ENCODE measurements at regions of chr18 and their contacts with region 1.

Region 1: GRCh38 chr18:2636126-2636631 is 19.3 kb upstream of the SMCHD1 start:
- DNase-seq: no peak
- H3K4me3 ChIP-seq: peak overlapping the region; percentile 19 to 31
- H3K4me3 Mint-ChIP-seq: peak overlapping the region; percentile 81 to 88 (median 85)
- H3K27ac ChIP-seq: peak overlapping the region; percentile 87
- H3K27ac Mint-ChIP-seq: peak overlapping the region in 6 of 7 donors; percentile 97 to 99 (median 98)
- H3K4me1 ChIP-seq: peaks cover 88% of the 10 kb centered on the region
- H3K4me1 Mint-ChIP-seq: peaks cover 61 to 100% (median 88%) of the 10 kb centered on the region in 4 donors
- H3K27me3 ChIP-seq: no peaks in the 10 kb centered on the region
- H3K27me3 Mint-ChIP-seq: peaks cover 0 to 2% of the 10 kb centered on the region in 2 donors

Region 2: GRCh38 chr18:2376707-2377106 is 259.5 kb before region 1 on chr18:
- CTCF ChIA-PET with region 1: no interaction called
- POLR2A ChIA-PET with region 1: no interaction called
- intact Hi-C with region 1: no loop called
- DNase-seq: no peak
- H3K4me3 ChIP-seq: no peak overlapping the region
- H3K4me3 Mint-ChIP-seq: no peak overlapping the region
- H3K27ac ChIP-seq: no peak overlapping the region
- H3K27ac Mint-ChIP-seq: no peak overlapping the region
- H3K4me1 ChIP-seq: no peaks in the 10 kb centered on the region
- H3K4me1 Mint-ChIP-seq: no peaks in the 10 kb centered on the region
- H3K27me3 ChIP-seq: no peaks in the 10 kb centered on the region
- H3K27me3 Mint-ChIP-seq: peaks cover 23 to 31% of the 10 kb centered on the region in 2 donors

Region 3: GRCh38 chr18:2480575-2480974 is 155.6 kb before region 1 on chr18:
- CTCF ChIA-PET with region 1: no interaction called
- POLR2A ChIA-PET with region 1: no interaction called
- intact Hi-C with region 1: no loop called
- DNase-seq: no peak
- H3K4me3 ChIP-seq: no peak overlapping the region
- H3K4me3 Mint-ChIP-seq: no peak overlapping the region
- H3K27ac ChIP-seq: no peak overlapping the region
- H3K27ac Mint-ChIP-seq: no peak overlapping the region
- H3K4me1 ChIP-seq: no peaks in the 10 kb centered on the region
- H3K4me1 Mint-ChIP-seq: no peaks in the 10 kb centered on the region
- H3K27me3 ChIP-seq: no peaks in the 10 kb centered on the region
- H3K27me3 Mint-ChIP-seq: peaks cover 15 to 26% of the 10 kb centered on the region in 2 donors

Region 4: DNA sequence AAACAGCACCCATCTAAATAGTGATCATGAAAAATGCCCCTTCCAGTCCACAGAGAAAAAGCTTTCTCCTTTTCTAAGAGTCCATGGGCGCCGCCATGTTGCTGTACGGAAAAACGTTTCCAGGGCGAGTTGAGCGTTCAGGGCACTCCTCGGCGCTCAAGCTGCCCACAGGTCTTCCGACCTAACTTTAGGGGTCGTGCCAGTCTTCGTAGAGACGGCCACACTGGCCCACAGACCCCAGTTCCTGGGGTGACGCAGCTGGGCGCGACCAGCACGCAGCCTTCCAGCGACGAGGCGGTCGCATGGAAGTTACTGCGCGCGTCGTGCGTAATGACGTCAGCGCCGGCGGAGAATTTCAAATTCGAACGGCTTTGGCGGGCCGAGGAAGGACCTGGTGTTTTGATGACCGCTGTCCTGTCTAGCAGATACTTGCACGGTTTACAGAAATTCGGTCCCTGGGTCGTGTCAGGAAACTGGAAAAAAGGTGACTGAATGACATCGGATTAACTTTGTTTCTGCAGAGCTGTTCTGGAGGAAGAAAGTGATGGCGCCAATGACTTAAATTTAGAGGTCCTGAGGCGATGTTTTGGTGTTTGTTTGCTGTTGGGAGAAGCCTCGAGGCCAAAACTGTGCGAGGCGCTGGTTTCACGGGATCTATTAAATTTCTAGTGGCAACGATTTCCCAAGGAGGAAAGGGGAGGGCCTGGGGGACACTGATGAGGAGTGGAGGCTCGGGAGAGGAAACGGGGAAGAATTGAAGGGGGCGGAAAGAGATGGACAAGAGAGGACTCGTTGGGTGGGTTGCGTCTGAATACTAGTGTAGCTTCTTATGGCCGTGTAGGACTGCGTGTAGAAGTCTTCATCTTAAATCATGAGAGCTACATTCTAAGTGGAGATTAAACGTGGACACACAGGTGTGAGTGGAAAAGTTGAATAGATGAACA is 64.7 kb before region 1 on chr18 and contains the starts of genes METTL4 and NDC80:
- CTCF ChIA-PET with region 1: interaction called, 16 read pairs
- POLR2A ChIA-PET with region 1: interaction called, 195 read pairs
- intact Hi-C with region 1: loop called (anchors 1 kb)
- DNase-seq: peak; percentile 84 to 91 (median 85)
- H3K4me3 ChIP-seq: peak within 1 kb of the TSS; percentile 80 to 88
- H3K4me3 Mint-ChIP-seq: peak within 1 kb of the TSS; percentile 99 to 100 (median 100)
- H3K27ac ChIP-seq: peak within 1 kb of the TSS; percentile 99
- H3K27ac Mint-ChIP-seq: peak within 1 kb of the TSS; percentile 99 to 100 (median 100)
- H3K4me1 ChIP-seq: peaks cover 44% of the 10 kb centered on the region
- H3K4me1 Mint-ChIP-seq: peaks cover 42 to 74% (median 56%) of the 10 kb centered on the region in 4 donors
- H3K27me3 ChIP-seq: no peaks in the 10 kb centered on the region
- H3K27me3 Mint-ChIP-seq: no peaks in the 10 kb centered on the region
- total RNA-seq, gene METTL4: 25.8 to 29.3 TPM
- total RNA-seq, gene NDC80: 3.8 to 6.2 TPM

Region 5: DNA sequence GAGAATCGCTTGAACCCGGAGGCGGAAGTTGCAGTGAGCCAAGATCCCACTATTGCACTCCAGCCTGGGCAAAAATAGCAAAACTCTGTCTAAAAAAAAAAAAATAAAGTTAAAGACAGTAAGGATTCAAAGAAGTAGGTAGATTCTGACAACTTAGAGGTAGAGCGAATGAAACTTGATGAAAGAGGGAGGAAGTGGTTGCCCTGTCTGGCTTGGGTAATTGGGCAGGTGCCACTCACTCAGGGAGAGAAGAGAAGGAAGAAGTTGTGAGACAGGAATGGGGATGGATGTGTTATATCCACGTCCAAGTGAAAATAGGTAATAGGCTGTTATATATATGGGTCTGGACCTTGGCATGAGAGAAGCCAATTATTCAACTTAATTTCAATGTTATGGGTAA is 38.5 kb before region 1 on chr18:
- CTCF ChIA-PET with region 1: no interaction called
- POLR2A ChIA-PET with region 1: interaction called, 282 read pairs
- intact Hi-C with region 1: no loop called
- DNase-seq: peak in 4 of 5 donors; percentile 20 to 41 (median 33)
- H3K4me3 ChIP-seq: no peak overlapping the region
- H3K4me3 Mint-ChIP-seq: peak overlapping the region in 6 of 8 donors; percentile 0 to 57 (median 34)
- H3K27ac ChIP-seq: no peak overlapping the region
- H3K27ac Mint-ChIP-seq: peak overlapping the region in 6 of 7 donors; percentile 22 to 93 (median 53)
- H3K4me1 ChIP-seq: peaks cover 34% of the 10 kb centered on the region
- H3K4me1 Mint-ChIP-seq: peaks cover 15 to 42% (median 28%) of the 10 kb centered on the region in 4 donors
- H3K27me3 ChIP-seq: no peaks in the 10 kb centered on the region
- H3K27me3 Mint-ChIP-seq: no peaks in the 10 kb centered on the region

Region 6: DNA sequence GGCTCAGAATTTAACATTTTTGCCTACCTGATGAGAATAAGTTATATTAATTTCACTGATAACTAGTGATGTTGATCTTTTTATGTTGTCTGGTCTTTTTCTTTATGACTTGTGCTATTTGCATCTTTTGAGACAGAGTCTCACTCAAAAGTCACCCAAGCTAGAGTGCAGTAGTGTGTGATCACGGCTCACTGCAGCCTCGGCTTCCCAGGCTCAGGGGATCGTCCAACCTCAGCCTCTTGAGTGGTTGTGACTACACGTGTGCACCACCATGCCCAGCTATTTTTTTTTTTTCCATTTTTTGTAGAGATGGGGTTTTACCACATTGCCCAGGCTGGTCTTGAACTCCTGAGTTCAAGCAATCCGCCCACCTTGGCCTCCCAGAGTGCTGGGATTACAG is 26.8 kb after region 1 on chr18:
- CTCF ChIA-PET with region 1: interaction called, 75 read pairs
- POLR2A ChIA-PET with region 1: interaction called, 698 read pairs
- intact Hi-C with region 1: no loop called
- DNase-seq: no peak
- H3K4me3 ChIP-seq: no peak overlapping the region
- H3K4me3 Mint-ChIP-seq: peak overlapping the region; percentile 57 to 83 (median 72)
- H3K27ac ChIP-seq: no peak overlapping the region
- H3K27ac Mint-ChIP-seq: peak overlapping the region in 5 of 7 donors; percentile 53 to 90 (median 83)
- H3K4me1 ChIP-seq: peaks cover 74% of the 10 kb centered on the region
- H3K4me1 Mint-ChIP-seq: peaks cover 49 to 78% (median 65%) of the 10 kb centered on the region in 4 donors
- H3K27me3 ChIP-seq: no peaks in the 10 kb centered on the region
- H3K27me3 Mint-ChIP-seq: no peaks in the 10 kb centered on the region

Region 7: DNA sequence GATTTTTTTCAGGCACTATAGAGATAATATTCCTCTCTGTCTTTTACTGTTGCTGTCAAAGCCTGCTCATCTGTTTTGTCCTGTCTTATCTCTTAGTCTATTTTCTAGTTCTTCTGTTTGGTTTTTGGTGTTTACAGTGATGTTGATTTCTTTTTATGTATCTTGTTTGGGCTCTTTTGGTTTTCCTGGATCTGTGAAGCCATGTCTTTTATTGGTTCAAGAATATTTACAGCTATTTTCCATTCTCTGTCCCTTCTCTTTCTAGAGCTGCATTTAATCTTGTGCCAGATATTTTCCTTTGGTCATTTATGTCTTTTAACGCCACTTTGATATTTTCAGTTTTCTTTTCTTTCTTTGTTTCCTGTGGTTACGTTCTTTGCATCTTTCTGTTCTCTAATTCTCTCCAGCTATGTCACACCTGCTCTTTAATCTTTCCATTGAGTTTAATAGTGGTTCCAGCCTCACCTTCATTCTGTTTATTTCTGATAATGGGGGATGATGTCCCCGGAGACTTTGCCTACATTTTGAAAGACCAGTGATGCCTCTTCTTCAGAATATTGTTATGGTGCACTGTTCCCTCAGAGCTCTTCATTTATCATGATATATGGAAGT is 51.3 kb after region 1 on chr18:
- CTCF ChIA-PET with region 1: interaction called, 4 read pairs
- POLR2A ChIA-PET with region 1: interaction called, 31 read pairs
- intact Hi-C with region 1: no loop called
- DNase-seq: no peak
- H3K4me3 ChIP-seq: no peak overlapping the region
- H3K4me3 Mint-ChIP-seq: peak overlapping the region in 7 of 8 donors; percentile 3 to 74 (median 51)
- H3K27ac ChIP-seq: no peak overlapping the region
- H3K27ac Mint-ChIP-seq: peak overlapping the region; percentile 7 to 88 (median 40)
- H3K4me1 ChIP-seq: peaks cover 49% of the 10 kb centered on the region
- H3K4me1 Mint-ChIP-seq: peaks cover 42 to 70% (median 61%) of the 10 kb centered on the region in 4 donors
- H3K27me3 ChIP-seq: no peaks in the 10 kb centered on the region
- H3K27me3 Mint-ChIP-seq: no peaks in the 10 kb centered on the region

Measured in CD4-positive, alpha-beta memory T cell (primary cell).